ENCODE measurements at regions of chr14 and their contacts with region 1.

Region 1: GRCh38 chr14:88667555-88668273 is 104.9 kb downstream of the ZC3H14 start:
- DNase-seq: peak; percentile 85
- H3K4me3 ChIP-seq: no peak overlapping the region
- H3K27ac ChIP-seq: no peak overlapping the region
- H3K4me1 ChIP-seq: peaks cover 16% of the 10 kb centered on the region
- CTCF ChIP-seq: peak; percentile 93

Region 2: GRCh38 chr14:88682495-88683114 is 14.9 kb after region 1 on chr14:
- CTCF ChIA-PET with region 1: interaction called, 4 read pairs
- POLR2A ChIA-PET with region 1: interaction called, 13 read pairs
- intact Hi-C with region 1: no loop called
- DNase-seq: no peak
- H3K4me3 ChIP-seq: no peak overlapping the region
- H3K27ac ChIP-seq: no peak overlapping the region
- H3K4me1 ChIP-seq: no peaks in the 10 kb centered on the region
- CTCF ChIP-seq: no peak

Region 3: DNA sequence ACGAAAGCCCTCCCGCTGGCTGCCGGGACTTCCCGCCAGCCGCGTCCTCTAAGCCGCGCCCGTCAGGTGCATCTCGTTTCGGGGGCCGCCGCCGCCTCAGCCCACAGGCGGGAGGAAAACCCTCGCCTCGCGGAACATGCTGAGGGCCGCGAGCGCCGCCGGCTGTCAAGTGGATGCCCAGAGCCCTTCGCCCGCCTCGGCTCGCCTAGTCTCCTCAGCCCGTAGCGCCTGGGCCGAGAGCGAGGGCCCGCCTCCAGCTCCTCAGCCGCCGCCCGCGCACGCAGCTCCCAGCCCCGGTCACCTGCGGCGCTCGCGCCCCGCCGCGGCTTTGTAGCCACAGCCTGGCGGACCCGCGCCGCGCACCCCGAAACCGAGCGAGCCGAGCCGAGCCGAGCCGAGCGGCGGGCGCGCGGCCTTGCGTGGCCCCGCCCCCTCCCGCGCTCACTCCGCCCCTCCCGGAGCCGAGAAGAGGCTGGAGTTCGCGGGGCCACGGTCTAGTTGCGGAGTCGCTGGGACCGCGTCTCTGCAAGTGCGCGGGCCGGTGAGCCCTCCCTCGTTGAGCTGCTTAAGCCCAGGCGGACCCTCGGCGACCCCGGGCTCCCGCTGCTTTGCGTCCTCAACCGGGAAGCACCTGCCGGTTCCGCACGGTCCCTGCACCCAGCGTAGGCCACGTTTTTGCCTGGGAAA is 125.0 kb after region 1 on chr14 and contains the start of gene EML5:
- CTCF ChIA-PET with region 1: no interaction called
- POLR2A ChIA-PET with region 1: no interaction called
- intact Hi-C with region 1: loop called (anchors 1 kb)
- DNase-seq: peak; percentile 87
- H3K4me3 ChIP-seq: peak within 1 kb of the TSS; percentile 74
- H3K27ac ChIP-seq: peak within 1 kb of the TSS; percentile 32
- H3K4me1 ChIP-seq: peaks cover 14% of the 10 kb centered on the region
- CTCF ChIP-seq: peak; percentile 20
- total RNA-seq, gene EML5: 1.8 and 2.1 TPM in 2 replicates

Region 4: DNA sequence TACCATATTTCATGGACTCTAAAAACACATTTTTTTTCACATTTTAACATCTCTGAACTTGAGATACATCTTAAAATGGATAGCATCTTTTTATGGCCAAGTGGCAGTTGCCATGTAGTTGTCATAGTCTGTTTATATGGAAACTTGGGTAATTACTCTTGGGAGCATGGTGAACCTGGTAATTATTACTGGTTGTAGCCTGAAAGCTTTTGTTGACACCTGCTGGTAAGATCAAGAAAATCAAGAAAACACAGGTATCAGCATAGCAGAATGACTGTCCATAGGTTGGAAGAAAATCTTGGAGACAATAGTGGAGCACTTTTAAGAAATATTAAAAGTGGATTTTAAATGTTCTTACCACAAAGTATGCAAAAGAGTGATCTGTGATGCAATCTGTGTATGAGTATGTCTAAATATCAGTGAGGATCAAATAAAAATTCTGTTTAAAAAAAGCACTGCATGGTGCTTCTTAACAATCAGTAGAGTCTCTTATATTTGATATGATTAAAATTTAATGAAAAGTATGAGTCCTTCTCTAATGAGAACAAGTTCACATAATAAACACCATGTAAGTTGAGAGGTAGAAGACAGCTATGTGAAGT is 200.9 kb after region 1 on chr14:
- CTCF ChIA-PET with region 1: interaction called, 3 read pairs
- POLR2A ChIA-PET with region 1: interaction called, 8 read pairs
- intact Hi-C with region 1: loop called (anchors 1 kb)
- DNase-seq: peak; percentile 21
- H3K4me3 ChIP-seq: no peak overlapping the region
- H3K27ac ChIP-seq: no peak overlapping the region
- H3K4me1 ChIP-seq: no peaks in the 10 kb centered on the region
- CTCF ChIP-seq: peak; percentile 72

Region 5: DNA sequence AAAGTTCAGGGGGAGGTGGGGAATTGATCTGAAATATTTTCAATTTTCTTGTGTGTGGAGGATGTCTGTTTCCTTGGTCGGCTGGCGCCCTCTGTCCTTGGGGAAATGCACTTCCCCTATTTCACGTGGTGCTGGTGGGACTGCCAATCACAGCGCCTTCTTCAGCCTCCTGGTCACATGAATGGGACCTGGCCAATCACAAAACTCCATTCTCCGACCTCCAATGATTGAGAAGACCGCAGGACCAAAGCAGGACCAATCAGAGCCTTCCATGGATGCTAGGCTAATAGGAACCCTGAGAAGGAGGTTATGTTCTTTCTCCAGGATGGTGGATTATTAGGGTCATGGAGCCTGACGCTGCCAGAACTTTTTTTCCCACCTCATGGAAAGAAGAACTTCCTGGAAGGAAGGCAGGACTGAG is 345.4 kb after region 1 on chr14:
- CTCF ChIA-PET with region 1: no interaction called
- POLR2A ChIA-PET with region 1: no interaction called
- intact Hi-C with region 1: loop called (anchors 5 kb)
- DNase-seq: peak; percentile 18
- H3K4me3 ChIP-seq: no peak overlapping the region
- H3K27ac ChIP-seq: no peak overlapping the region
- H3K4me1 ChIP-seq: peaks cover 6% of the 10 kb centered on the region
- CTCF ChIP-seq: peak; percentile 48; the same call in 1 of the 2 replicates

Measured in OCI-LY7 (cell line).